Activated B cell treated with CpG ODN at 0.5 μM for 24 hours (primary cell): ENCODE measurements at regions of chr3 and their contacts with region 1.

Region 1: GRCh38 chr3:45906681-45907407 is 20.5 kb downstream of the CCR9 start:
- DNase-seq: no peak
- ATAC-seq: no peak
- H3K4me3 Mint-ChIP-seq: no peak overlapping the region
- H3K27ac Mint-ChIP-seq: no peak overlapping the region
- H3K4me1 Mint-ChIP-seq: peaks cover 48% of the 10 kb centered on the region
- H3K27me3 Mint-ChIP-seq: no peaks in the 10 kb centered on the region
- CTCF ChIP-seq: no peak

Region 2: DNA sequence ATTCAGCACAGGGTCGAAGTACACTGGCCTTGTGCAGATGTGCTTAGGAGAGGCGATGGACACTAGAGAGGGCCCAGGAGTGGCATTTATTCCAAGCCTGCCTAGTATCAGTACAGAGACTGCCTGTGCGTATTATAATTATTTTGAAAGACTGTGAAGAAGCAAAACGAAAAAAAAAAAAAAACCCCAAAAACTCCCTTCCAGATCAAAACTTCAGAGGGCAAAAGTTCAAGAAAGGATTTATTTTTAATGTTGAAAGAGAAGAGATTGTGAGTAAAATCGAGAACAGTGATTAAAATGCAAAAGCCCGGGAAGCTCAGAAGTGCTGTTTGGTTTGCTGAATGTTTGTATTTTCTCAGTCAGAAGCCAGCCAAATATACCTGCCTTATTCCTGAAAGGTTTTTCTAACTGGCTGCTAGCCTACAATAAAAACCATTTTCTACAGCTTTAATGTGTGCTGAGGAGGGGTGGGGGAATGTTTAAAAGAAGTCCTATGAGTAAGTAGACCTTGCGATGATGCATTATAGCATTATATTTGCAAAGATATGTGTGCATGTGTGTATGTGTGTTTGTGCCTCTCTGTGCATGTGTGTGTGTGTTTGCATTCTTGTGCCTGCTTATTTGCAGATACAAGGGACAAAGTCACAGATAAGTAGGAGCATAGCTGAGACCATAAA is 45.7 kb before region 1 on chr3:
- CTCF ChIA-PET with region 1: no interaction called
- POLR2A ChIA-PET with region 1: no interaction called
- intact Hi-C with region 1: loop called (anchors 2 kb)
- DNase-seq: no peak
- ATAC-seq: peak; percentile 26
- H3K4me3 Mint-ChIP-seq: peak overlapping the region; percentile 20
- H3K27ac Mint-ChIP-seq: peak overlapping the region; percentile 41
- H3K4me1 Mint-ChIP-seq: peaks cover 46% of the 10 kb centered on the region
- H3K27me3 Mint-ChIP-seq: no peaks in the 10 kb centered on the region
- CTCF ChIP-seq: no peak

Region 3: GRCh38 chr3:45870099-45870498 is 36.7 kb before region 1 on chr3:
- CTCF ChIA-PET with region 1: no interaction called
- POLR2A ChIA-PET with region 1: no interaction called
- intact Hi-C with region 1: loop called (anchors 5 kb)
- DNase-seq: no peak
- ATAC-seq: peak; percentile 72
- H3K4me3 Mint-ChIP-seq: no peak overlapping the region
- H3K27ac Mint-ChIP-seq: peak overlapping the region; percentile 41
- H3K4me1 Mint-ChIP-seq: peaks cover 42% of the 10 kb centered on the region
- H3K27me3 Mint-ChIP-seq: peaks cover 4% of the 10 kb centered on the region
- CTCF ChIP-seq: no peak

Region 4: GRCh38 chr3:45923755-45924154 is 16.9 kb after region 1 on chr3:
- CTCF ChIA-PET with region 1: no interaction called
- POLR2A ChIA-PET with region 1: no interaction called
- intact Hi-C with region 1: no loop called
- DNase-seq: no peak
- ATAC-seq: no peak
- H3K4me3 Mint-ChIP-seq: no peak overlapping the region
- H3K27ac Mint-ChIP-seq: no peak overlapping the region
- H3K4me1 Mint-ChIP-seq: peaks cover under 1% of the 10 kb centered on the region
- H3K27me3 Mint-ChIP-seq: no peaks in the 10 kb centered on the region
- CTCF ChIP-seq: no peak